ENCODE measurements at regions of chr17 and their contacts with region 1.

Region 1: DNA sequence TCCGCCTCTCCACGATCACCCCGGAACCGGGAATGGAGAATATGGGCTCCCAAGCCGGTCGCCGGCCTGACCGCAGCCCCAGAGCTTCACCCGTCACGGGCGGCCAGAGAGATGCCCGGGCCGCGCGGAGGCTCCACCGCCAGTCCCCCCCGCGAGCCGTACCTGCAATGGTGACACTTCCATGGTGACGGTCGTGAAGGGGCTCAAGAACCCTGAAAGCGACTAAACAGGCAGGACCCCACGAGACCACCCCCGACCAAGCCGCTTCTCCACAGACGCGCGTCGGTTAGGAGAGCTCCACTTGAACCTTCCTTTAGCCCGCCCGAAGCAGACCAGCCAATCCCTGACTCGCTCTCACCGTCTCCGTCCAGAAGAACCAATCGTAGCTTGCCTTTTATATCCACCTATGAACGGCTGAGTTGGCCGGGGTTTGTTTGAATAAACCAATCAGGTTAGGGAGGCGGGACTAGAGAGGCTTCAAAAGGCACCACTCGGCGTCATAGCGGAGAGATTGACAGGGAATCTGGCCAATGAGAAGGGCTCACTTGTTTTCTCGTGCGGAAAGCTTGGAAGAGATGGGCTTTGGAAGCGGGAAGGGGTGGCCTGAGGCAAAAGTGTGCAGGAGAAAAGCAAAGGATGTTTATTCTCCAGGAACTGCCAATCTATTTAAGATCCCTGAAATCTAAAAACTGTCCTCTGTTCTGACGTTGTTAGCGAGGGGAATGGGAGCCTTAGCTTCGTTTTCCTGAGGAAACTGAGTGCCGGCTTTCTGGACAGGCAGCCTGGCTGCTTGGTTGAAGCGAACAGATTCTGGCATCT is at the start of gene TOP2A:
- DNase-seq: peak; percentile 98 to 99 (median 98)
- H3K4me3 ChIP-seq: peak within 1 kb of the TSS; percentile 77 to 91
- H3K4me3 Mint-ChIP-seq: peak within 1 kb of the TSS; percentile 90 to 97 (median 95)
- H3K27ac ChIP-seq: peak within 1 kb of the TSS; percentile 49
- H3K27ac Mint-ChIP-seq: peak within 1 kb of the TSS; percentile 69 to 97 (median 93)
- H3K4me1 ChIP-seq: peaks cover 37% of the 10 kb centered on the region
- H3K4me1 Mint-ChIP-seq: peaks cover 15 to 35% (median 28%) of the 10 kb centered on the region in 4 donors
- H3K27me3 ChIP-seq: no peaks in the 10 kb centered on the region
- H3K27me3 Mint-ChIP-seq: no peaks in the 10 kb centered on the region
- total RNA-seq, gene TOP2A: 0.47 to 1.1 TPM

Region 2: DNA sequence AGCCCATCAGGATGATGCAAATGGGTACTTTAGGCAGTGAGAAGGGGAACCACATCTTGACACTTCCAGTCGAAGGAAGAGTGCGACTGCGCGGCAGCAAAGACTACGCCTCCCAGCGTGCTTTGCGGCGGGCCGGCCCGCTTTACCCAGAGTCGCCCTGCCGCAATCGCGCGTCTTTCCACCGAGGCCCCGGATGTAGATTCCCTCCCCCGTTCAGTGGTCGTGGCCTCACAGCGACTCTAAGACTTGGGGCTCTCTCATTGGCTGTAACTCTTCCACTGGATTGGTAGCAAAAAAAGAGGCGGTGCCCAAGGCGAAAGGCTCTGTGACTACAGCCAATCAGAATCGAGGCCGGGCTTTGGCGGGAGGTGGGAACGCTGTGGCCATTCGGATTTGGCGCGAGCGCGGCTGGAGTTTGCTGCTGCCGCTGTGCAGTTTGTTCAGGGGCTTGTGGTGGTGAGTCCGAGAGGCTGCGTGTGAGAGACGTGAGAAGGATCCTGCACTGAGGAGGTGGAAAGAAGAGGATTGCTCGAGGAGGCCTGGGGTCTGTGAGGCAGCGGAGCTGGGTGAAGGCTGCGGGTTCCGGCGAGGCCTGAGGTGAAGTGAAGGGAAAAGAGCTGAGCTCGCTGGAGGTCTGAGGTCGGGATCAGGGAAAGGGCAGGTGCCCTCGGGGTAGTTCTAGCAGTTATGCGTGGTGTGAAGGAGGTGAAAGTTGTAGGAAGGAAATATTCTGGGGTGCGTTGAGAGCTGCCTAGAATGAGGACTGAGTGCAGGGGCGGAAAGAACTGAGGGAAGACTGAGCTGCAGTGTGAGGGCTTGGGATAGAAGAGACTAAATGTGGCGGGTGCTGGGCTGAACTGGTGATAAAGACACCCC is 130.1 kb before region 1 on chr17 and contains the start of gene CDC6:
- CTCF ChIA-PET with region 1: interaction called, 4 read pairs
- POLR2A ChIA-PET with region 1: no interaction called
- intact Hi-C with region 1: loop called (anchors 5 kb)
- DNase-seq: peak; percentile 97 to 100 (median 98)
- H3K4me3 ChIP-seq: peak within 1 kb of the TSS; percentile 80 to 89
- H3K4me3 Mint-ChIP-seq: peak within 1 kb of the TSS; percentile 97 to 100 (median 99)
- H3K27ac ChIP-seq: peak within 1 kb of the TSS; percentile 42
- H3K27ac Mint-ChIP-seq: peak within 1 kb of the TSS; percentile 82 to 98 (median 94)
- H3K4me1 ChIP-seq: peaks cover 26% of the 10 kb centered on the region
- H3K4me1 Mint-ChIP-seq: peaks cover 17 to 40% (median 27%) of the 10 kb centered on the region in 4 donors
- H3K27me3 ChIP-seq: no peaks in the 10 kb centered on the region
- H3K27me3 Mint-ChIP-seq: no peaks in the 10 kb centered on the region
- total RNA-seq, gene CDC6: 0.72 to 2.1 TPM

Region 3: GRCh38 chr17:40362696-40363110 is 55.1 kb before region 1 on chr17:
- CTCF ChIA-PET with region 1: interaction called, 37 read pairs
- POLR2A ChIA-PET with region 1: interaction called, 5 read pairs
- intact Hi-C with region 1: loop called (anchors 1 kb)
- DNase-seq: peak; percentile 72 to 76 (median 74)
- H3K4me3 ChIP-seq: peak overlapping the region in 1 of 2 donors; percentile 47
- H3K4me3 Mint-ChIP-seq: peak overlapping the region in 7 of 8 donors; percentile 39 to 82 (median 64)
- H3K27ac ChIP-seq: no peak overlapping the region
- H3K27ac Mint-ChIP-seq: peak overlapping the region in 3 of 7 donors; percentile 11 to 69 (median 57)
- H3K4me1 ChIP-seq: peaks cover 21% of the 10 kb centered on the region
- H3K4me1 Mint-ChIP-seq: peaks cover 5 to 12% (median 9%) of the 10 kb centered on the region in 4 donors
- H3K27me3 ChIP-seq: no peaks in the 10 kb centered on the region
- H3K27me3 Mint-ChIP-seq: peaks cover 0 to 7% of the 10 kb centered on the region in 2 donors

Region 4: GRCh38 chr17:40542558-40543411 is 125.0 kb after region 1 on chr17:
- CTCF ChIA-PET with region 1: interaction called, 4 read pairs
- POLR2A ChIA-PET with region 1: interaction called, 14 read pairs
- intact Hi-C with region 1: no loop called
- DNase-seq: peak in 4 of 5 donors; percentile 37 to 82 (median 50)
- H3K4me3 ChIP-seq: no peak overlapping the region
- H3K4me3 Mint-ChIP-seq: peak overlapping the region in 6 of 8 donors; percentile 67 to 94 (median 88)
- H3K27ac ChIP-seq: peak overlapping the region; percentile 69
- H3K27ac Mint-ChIP-seq: peak overlapping the region; percentile 94 to 100 (median 99)
- H3K4me1 ChIP-seq: peaks cover 90% of the 10 kb centered on the region
- H3K4me1 Mint-ChIP-seq: peaks cover 60 to 91% (median 75%) of the 10 kb centered on the region in 4 donors
- H3K27me3 ChIP-seq: no peaks in the 10 kb centered on the region
- H3K27me3 Mint-ChIP-seq: peaks cover 0 to 4% of the 10 kb centered on the region in 2 donors

Region 5: GRCh38 chr17:40707720-40708119 is 289.9 kb after region 1 on chr17:
- CTCF ChIA-PET with region 1: no interaction called
- POLR2A ChIA-PET with region 1: no interaction called
- intact Hi-C with region 1: no loop called
- DNase-seq: no peak
- H3K4me3 ChIP-seq: no peak overlapping the region
- H3K4me3 Mint-ChIP-seq: no peak overlapping the region
- H3K27ac ChIP-seq: no peak overlapping the region
- H3K27ac Mint-ChIP-seq: no peak overlapping the region
- H3K4me1 ChIP-seq: no peaks in the 10 kb centered on the region
- H3K4me1 Mint-ChIP-seq: no peaks in the 10 kb centered on the region
- H3K27me3 ChIP-seq: no peaks in the 10 kb centered on the region
- H3K27me3 Mint-ChIP-seq: peaks cover 21 to 25% of the 10 kb centered on the region in 2 donors

Measured in CD4-positive, alpha-beta memory T cell (primary cell).